ENCODE measurements at regions of chr17 and their contacts with region 1.

Region 1: GRCh38 chr17:80082403-80083135 is 18.8 kb upstream of the GAA start:
- DNase-seq: peak; percentile 50 to 86
- H3K4me3 ChIP-seq: no peak overlapping the region
- H3K27ac ChIP-seq: no peak overlapping the region
- H3K4me1 ChIP-seq: peaks cover 0 to 8% (median 1%) of the 10 kb centered on the region in 4 experiments; a peak in 5 of 7 replicates
- H3K27me3 ChIP-seq: no peaks in the 10 kb centered on the region
- CTCF ChIP-seq: peak; percentile 58 to 83 (median 78)
- EP300 ChIP-seq: no peak
- POLR2A ChIP-seq: no peak
- RAD21 ChIP-seq: peak; percentile 76 to 84

Region 2: GRCh38 chr17:79951361-79952264 is 131.0 kb before region 1 on chr17:
- CTCF ChIA-PET with region 1: no interaction called
- POLR2A ChIA-PET with region 1: no interaction called
- DNase-seq: no peak
- H3K4me3 ChIP-seq: peak overlapping the region in 1 of 4 experiments; percentile 54; a peak in 1 of 8 replicates
- H3K27ac ChIP-seq: no peak overlapping the region; the same call in 1 of the 2 replicates
- H3K4me1 ChIP-seq: peaks cover 20 to 64% (median 47%) of the 10 kb centered on the region in 4 experiments
- H3K27me3 ChIP-seq: no peaks in the 10 kb centered on the region
- CTCF ChIP-seq: no peak
- EP300 ChIP-seq: no peak
- POLR2A ChIP-seq: no peak
- RAD21 ChIP-seq: no peak

Region 3: GRCh38 chr17:80071116-80071980 is 11.2 kb before region 1 on chr17:
- CTCF ChIA-PET with region 1: interaction called, 32 read pairs
- POLR2A ChIA-PET with region 1: interaction called, 6 read pairs
- DNase-seq: no peak
- H3K4me3 ChIP-seq: no peak overlapping the region
- H3K27ac ChIP-seq: no peak overlapping the region
- H3K4me1 ChIP-seq: no peaks in the 10 kb centered on the region
- H3K27me3 ChIP-seq: no peaks in the 10 kb centered on the region
- CTCF ChIP-seq: no peak
- EP300 ChIP-seq: no peak
- POLR2A ChIP-seq: no peak
- RAD21 ChIP-seq: no peak

Region 4: DNA sequence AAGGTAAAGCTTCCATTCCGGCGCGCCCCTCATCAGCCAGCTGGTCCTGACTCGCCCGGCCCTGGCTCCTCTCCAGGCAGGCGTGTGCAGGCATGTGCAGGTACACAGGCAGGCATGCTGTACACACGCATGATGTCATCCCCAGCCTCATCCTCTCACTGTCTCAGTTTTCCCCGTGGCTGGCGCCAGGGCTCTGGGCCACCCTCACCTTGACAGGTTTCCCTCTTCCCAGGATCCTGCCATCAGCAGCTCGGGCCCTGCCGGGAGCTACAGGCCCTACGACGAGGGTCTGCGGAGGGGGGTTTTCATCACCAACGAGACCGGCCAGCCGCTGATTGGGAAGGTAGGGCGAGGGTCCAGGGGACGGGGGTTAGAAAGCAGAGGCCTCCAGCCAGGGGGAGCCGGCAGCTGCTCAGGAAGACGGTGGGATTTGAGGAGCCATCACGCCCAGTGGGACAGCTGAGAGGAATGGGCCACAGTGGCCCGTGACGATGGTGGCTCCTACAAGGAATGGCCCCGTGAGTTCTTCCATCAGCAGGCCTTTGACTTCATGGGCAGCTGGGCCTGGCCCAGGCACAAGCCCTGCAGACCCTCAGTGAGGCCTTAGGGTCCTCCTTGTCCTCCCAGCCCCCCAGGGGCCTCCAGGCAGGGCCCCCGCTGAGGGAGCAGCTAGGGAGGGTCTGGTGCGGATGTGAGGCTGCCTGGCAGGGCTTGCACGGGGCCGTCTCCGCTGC is 27.3 kb after region 1 on chr17:
- CTCF ChIA-PET with region 1: interaction called, 11 read pairs
- POLR2A ChIA-PET with region 1: interaction called, 3 read pairs
- DNase-seq: no peak
- H3K4me3 ChIP-seq: no peak overlapping the region
- H3K27ac ChIP-seq: no peak overlapping the region
- H3K4me1 ChIP-seq: peaks cover 0 to 11% (median 8%) of the 10 kb centered on the region in 4 experiments; a peak in 4 of 7 replicates
- H3K27me3 ChIP-seq: no peaks in the 10 kb centered on the region
- CTCF ChIP-seq: no peak
- EP300 ChIP-seq: no peak
- POLR2A ChIP-seq: no peak
- RAD21 ChIP-seq: no peak

Region 5: GRCh38 chr17:80138856-80139426 is 56.4 kb after region 1 on chr17:
- CTCF ChIA-PET with region 1: interaction called, 10 read pairs
- POLR2A ChIA-PET with region 1: interaction called, 5 read pairs
- DNase-seq: no peak
- H3K4me3 ChIP-seq: no peak overlapping the region
- H3K27ac ChIP-seq: no peak overlapping the region
- H3K4me1 ChIP-seq: no peaks in the 10 kb centered on the region
- H3K27me3 ChIP-seq: no peaks in the 10 kb centered on the region
- CTCF ChIP-seq: no peak
- EP300 ChIP-seq: no peak
- POLR2A ChIP-seq: no peak
- RAD21 ChIP-seq: no peak

Region 6: GRCh38 chr17:80173126-80173525 is 90.6 kb after region 1 on chr17:
- CTCF ChIA-PET with region 1: no interaction called
- POLR2A ChIA-PET with region 1: no interaction called
- DNase-seq: no peak
- H3K4me3 ChIP-seq: no peak overlapping the region
- H3K27ac ChIP-seq: no peak overlapping the region
- H3K4me1 ChIP-seq: peaks cover 0 to 6% (median under 1%) of the 10 kb centered on the region in 4 experiments; a peak in 2 of 7 replicates
- H3K27me3 ChIP-seq: no peaks in the 10 kb centered on the region; a peak in 1 of 7 replicates
- CTCF ChIP-seq: no peak
- EP300 ChIP-seq: no peak
- POLR2A ChIP-seq: no peak
- RAD21 ChIP-seq: no peak